Activated naive CD8-positive, alpha-beta T cell treated with anti-CD3 and anti-CD28 coated beads, Interleukin-2, amount 10 ng/mL, durations not matched to agents 7 days and 5 days (primary cell): ENCODE measurements at regions of chr6 and their contacts with region 1.

Region 1: DNA sequence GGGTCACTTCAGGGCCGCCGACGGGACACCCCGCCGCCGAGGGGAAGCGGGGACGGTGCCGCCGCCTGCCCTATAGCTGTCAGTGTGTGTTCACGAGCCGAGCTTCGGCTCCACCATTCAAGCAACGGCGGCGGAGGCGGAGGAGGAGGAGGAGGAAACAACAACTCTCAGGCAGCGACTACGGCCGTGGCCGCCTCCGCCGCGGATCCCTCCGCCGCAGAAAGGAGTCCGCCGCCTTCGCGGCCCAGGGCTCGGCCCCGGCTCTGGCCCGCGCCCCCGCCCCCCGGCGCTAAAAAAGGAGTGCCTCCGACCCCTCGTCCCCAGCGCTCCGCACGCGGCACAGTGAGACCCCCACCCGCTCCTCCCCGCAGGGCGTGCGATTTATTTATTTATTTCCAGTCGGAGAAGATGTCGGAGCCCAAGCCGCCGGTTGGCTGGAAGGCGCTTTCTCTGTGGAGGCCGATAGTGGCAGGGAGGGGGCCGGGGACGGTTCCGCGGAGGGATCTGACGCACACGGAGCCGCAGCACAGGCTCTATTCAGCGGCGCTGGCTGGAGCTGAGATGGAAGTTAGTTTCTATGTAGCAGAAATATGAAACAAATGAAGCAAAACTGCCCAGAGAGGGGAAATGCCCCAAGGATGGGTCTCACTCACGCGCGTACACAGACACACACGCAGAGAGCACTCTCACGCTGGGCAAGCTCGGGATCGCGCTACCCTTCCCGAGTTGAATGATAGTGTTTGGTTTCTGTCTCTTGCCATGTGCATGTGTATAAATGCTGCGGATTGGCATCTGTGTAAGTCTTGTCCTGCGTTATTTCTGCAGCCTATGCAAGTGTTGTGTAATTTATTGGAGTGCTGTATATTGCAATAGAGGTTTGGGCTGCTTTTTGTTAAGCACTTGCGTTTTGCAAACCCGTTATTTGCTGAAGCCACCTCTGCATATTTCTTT is at the start of gene PHIP:
- DNase-seq: peak; percentile 92
- ATAC-seq: peak; percentile 86
- H3K4me3 Mint-ChIP-seq: peak within 1 kb of the TSS; percentile 89
- H3K27ac Mint-ChIP-seq: peak within 1 kb of the TSS; percentile 98
- H3K4me1 Mint-ChIP-seq: peaks cover 19% of the 10 kb centered on the region
- H3K27me3 Mint-ChIP-seq: peaks cover 18% of the 10 kb centered on the region
- total RNA-seq, gene PHIP: 33.2 to 34.3 TPM

Region 2: GRCh38 chr6:78867370-78868040 is 210.8 kb before region 1 on chr6 and contains the start of gene IRAK1BP1:
- POLR2A ChIA-PET with region 1: interaction called, 13 read pairs
- DNase-seq: peak; percentile 86
- ATAC-seq: peak; percentile 97
- H3K4me3 Mint-ChIP-seq: peak within 1 kb of the TSS; percentile 97
- H3K27ac Mint-ChIP-seq: peak within 1 kb of the TSS; percentile 92
- H3K4me1 Mint-ChIP-seq: peaks cover 21% of the 10 kb centered on the region
- H3K27me3 Mint-ChIP-seq: no peaks in the 10 kb centered on the region
- total RNA-seq, gene IRAK1BP1: 3.0 to 3.1 TPM

Region 3: DNA sequence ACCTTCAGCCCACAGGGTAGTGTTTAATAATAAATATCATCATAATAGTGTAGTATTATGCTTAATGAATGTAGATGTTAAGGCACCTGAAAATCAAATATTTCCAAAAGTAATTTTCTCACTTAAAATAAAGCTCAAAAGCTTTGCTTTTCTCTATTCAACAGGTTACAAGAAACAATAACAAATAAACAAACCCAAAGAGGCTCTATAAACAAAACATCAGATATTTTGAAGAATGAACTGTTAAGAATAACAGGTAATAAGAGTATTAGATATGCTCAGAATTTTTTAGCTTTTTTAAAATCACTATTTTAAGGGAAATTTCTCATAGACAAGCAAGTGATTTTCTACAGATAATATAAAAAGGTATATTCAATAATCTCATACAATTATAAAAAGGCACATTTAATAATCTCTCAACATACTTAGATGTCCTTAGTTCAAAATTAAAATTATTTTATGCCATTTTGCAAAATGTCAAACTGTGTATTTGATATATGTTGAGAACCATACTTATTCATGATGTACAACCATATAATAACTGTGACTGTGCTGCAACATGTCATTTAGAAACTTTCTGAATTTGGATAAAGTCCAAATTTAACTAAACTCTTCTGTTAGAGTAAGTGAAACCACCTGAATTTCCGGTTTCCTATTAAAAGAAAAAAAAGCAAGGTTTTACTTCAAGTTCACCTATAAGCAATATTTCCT is 36.1 kb before region 1 on chr6:
- POLR2A ChIA-PET with region 1: interaction called, 14 read pairs
- DNase-seq: no peak
- ATAC-seq: peak; percentile 54
- H3K4me3 Mint-ChIP-seq: no peak overlapping the region
- H3K27ac Mint-ChIP-seq: no peak overlapping the region
- H3K4me1 Mint-ChIP-seq: peaks cover 15% of the 10 kb centered on the region
- H3K27me3 Mint-ChIP-seq: no peaks in the 10 kb centered on the region